ENCODE measurements at regions of chr18 and their contacts with region 1.

Region 1: DNA sequence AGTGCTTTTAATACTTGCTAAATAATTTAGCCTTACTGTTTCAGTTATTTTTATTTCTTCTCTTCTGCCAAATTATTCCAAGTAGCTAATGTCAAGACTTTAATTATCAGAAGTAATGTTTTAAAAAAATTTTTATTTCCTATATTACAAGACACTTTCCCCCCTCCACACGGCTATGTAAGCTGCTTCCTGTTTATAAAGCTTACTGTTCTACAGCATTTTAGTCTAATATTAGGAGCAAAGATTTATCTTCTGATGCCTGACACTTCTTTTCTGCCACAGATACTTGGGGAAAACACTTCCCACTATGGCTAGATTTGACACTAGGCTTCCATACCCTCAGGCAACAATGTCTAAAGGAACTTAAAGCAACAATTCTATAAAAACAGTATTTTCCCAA is 62.3 kb downstream of the ROCK1 start:
- DNase-seq: peak; percentile 69
- H3K4me3 ChIP-seq: no peak overlapping the region
- H3K27ac ChIP-seq: no peak overlapping the region
- H3K4me1 ChIP-seq: peaks cover 9% of the 10 kb centered on the region
- H3K27me3 ChIP-seq: no peaks in the 10 kb centered on the region
- CTCF ChIP-seq: no peak
- POLR2A ChIP-seq: no peak

Region 2: GRCh38 chr18:20988726-20989125 is 60.6 kb before region 1 on chr18:
- CTCF ChIA-PET with region 1: no interaction called
- POLR2A ChIA-PET with region 1: no interaction called
- dilution Hi-C with region 1: no loop called
- intact Hi-C with region 1: loop called (anchors 10 kb)
- DNase-seq: no peak
- H3K4me3 ChIP-seq: no peak overlapping the region
- H3K27ac ChIP-seq: no peak overlapping the region
- H3K4me1 ChIP-seq: no peaks in the 10 kb centered on the region
- H3K27me3 ChIP-seq: no peaks in the 10 kb centered on the region
- CTCF ChIP-seq: no peak
- POLR2A ChIP-seq: no peak

Region 3: DNA sequence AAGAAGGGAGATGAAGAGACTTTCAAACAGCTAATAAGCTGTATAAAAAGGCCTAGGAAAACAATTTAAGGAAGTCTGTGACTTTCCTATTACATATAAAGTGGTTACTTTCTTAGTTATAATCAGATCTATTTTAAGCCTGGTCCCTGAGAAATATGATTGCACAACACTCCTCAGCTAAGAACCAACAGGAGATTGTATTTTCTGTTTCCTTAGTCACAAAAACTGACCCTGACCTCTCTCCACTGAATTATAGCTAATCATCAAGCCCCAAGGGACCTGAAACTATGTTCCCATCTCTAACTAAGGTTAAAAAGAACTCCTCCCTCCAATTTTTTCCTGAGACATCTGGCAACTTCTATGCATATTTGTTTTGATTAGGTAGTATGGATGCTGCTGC is 44.6 kb before region 1 on chr18:
- CTCF ChIA-PET with region 1: no interaction called
- POLR2A ChIA-PET with region 1: no interaction called
- dilution Hi-C with region 1: no loop called
- intact Hi-C with region 1: no loop called
- DNase-seq: peak; percentile 42
- H3K4me3 ChIP-seq: no peak overlapping the region
- H3K27ac ChIP-seq: no peak overlapping the region
- H3K4me1 ChIP-seq: no peaks in the 10 kb centered on the region
- H3K27me3 ChIP-seq: no peaks in the 10 kb centered on the region
- CTCF ChIP-seq: no peak
- POLR2A ChIP-seq: no peak

Region 4: DNA sequence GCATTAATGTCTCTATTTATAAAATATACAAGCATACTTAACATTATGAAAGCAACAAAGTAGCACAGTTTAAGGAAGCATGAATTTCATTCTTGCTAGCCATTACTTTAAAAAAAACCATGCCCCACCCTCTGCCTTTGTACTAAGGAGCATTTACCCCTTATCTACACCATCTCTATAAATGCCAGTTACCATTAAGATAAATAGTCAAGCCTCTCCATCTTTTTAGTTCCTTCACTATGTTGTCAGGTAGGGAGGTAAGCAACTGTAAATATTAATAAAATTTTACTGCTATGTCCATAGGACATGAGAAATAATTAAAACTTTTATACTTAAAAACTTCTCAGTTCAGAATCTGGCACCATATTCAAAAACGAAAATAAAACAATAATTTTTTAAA is 20.2 kb after region 1 on chr18:
- CTCF ChIA-PET with region 1: no interaction called
- POLR2A ChIA-PET with region 1: no interaction called
- dilution Hi-C with region 1: no loop called
- intact Hi-C with region 1: no loop called
- DNase-seq: no peak
- H3K4me3 ChIP-seq: no peak overlapping the region
- H3K27ac ChIP-seq: no peak overlapping the region
- H3K4me1 ChIP-seq: no peaks in the 10 kb centered on the region
- H3K27me3 ChIP-seq: no peaks in the 10 kb centered on the region
- CTCF ChIP-seq: no peak
- POLR2A ChIP-seq: no peak

Measured in endothelial cell of umbilical vein (primary cell).